ENCODE measurements at regions of chr1 and their contacts with region 1.

Region 1: GRCh38 chr1:112619520-112620376 is at the start of gene CAPZA1:
- DNase-seq: peak; percentile 94
- ATAC-seq: peak; percentile 97 to 98
- total RNA-seq, gene CAPZA1: 48.1 to 59.9 TPM

Region 2: DNA sequence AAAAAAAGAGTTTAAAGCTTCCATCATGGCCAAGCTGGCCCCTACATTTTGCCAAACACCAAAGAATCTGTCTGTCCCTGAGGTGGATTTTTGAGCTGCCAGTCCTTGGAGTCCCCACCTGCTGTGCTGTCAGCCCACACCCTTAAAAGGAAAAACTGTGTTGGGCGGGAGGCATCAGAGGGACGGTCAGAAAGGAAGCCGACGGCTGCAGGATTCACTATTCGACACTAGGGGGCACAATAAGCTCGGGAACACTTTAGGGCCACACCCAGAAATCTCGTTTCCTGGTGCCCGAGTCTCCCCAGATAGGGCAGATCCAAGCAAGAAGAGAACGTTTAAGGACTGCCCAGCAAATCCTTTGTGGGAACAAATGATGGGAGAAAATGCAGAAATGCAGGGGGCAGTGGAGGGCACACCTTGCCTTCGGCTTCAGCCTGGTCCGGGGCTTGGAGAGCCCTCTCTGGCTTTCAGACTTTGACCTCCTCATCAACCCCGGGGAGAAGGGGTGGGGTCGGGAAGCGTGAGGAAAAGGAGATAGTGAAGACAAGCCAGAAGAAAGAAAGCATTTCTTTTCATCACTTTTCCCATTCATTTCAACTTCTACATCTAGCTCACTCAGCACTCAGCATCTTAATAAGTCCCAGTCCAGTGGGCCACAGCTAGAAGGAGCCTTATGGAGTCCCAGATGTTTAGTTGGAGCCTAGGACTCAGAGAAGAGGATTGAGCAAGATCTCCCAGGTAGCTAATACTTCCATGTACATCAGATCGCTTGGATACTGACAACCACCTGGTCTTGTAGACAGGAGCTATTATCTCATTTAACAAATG is 228.8 kb before region 1 on chr1:
- intact Hi-C with region 1: loop called (anchors 5 to 10 kb)
- DNase-seq: peak; percentile 89
- ATAC-seq: peak; percentile 83 to 91

Region 3: DNA sequence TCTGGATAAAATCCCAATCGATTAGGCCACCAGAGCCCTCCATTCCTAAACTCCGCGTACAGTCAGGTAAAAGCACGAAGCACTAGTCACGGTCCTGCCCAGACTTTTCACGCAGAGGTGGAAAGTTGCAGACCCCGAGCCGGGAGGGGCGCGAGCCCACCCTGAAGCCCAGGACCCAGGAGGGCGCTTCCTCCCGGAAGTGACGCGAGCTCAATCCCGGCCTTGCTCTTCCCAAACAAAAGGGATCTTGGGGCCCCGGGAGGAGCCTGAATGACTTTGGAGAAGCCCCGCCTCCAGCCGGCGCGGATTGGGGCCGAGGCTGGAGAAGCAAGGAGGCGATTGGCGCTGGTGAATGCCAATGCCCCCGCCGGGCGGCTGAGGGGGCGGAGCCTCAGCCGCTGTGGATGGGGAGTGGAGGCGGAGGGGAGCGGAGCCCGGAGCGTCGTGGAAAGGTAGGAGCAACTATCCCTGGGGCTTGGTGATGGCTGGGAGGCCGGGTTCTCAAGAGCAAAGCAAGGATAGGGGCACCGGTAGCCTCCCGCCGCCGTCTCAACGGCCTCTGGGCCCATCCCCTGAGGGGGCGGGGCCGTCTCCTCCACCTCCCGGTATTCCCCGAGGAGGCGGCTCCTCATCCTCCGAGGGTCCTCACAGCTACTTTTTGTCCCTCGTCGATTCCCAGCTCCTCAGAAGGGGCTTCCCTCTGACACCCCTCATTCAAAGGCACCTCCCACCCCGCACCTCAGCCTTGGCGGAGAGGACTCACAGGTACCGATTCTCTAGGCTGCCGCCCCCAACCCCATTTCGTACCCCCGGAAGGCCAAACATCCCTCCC is 223.7 kb before region 1 on chr1 and contains the start of gene CTTNBP2NL:
- intact Hi-C with region 1: loop called in 1 of 2 experiments (anchors 5 kb)
- DNase-seq: peak; percentile 98
- ATAC-seq: peak; percentile 95 to 97
- total RNA-seq, gene CTTNBP2NL: 17.1 to 24.3 TPM

Region 4: DNA sequence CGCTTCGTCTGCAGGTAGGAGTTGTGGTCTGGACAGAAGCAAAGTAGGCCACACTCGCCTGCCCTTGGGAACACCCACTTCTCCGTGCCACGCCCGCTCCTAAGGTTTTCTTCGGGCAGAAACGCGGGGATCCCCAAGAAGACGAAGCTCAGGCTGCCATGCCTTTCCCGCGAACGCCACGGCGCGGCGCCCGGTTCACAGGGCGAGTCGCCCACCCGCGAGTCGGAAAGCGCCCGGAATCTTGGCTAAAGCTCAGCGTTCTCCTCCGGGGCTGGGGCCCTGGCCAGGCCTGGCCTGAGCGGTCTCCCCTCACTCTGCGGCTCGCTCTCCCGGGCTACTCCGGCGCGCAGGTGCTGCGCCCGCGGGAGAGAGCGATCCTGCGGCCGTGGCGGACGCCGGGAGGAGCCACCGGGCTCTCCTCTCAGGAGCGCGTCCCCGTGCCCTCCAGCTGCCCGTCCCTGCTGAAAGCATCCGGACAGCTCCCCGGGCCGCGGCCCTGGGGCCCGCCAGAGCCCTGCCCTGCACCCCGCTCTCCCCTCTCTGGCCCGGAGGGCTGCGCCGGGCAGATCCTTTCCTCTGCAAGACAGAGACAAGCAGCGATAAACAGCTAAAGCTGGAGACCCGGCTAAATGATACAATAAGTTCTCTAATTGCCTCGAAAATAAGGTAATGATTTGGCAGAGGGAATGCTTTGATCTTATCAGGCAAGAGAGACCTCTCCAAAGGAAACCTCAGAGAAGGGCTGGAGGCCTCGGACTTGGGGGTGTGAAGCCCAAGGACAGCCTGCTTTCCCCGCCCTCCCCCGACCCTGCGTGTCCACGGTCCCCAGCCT is 117.7 kb before region 1 on chr1:
- intact Hi-C with region 1: loop called in 1 of 2 experiments (anchors 10 kb)
- DNase-seq: peak; percentile 79
- ATAC-seq: peak; percentile 87 to 90

Region 5: GRCh38 chr1:112515311-112516009 is 104.3 kb before region 1 on chr1:
- intact Hi-C with region 1: no loop called
- DNase-seq: no peak
- ATAC-seq: peak; percentile 13 to 72

Region 6: DNA sequence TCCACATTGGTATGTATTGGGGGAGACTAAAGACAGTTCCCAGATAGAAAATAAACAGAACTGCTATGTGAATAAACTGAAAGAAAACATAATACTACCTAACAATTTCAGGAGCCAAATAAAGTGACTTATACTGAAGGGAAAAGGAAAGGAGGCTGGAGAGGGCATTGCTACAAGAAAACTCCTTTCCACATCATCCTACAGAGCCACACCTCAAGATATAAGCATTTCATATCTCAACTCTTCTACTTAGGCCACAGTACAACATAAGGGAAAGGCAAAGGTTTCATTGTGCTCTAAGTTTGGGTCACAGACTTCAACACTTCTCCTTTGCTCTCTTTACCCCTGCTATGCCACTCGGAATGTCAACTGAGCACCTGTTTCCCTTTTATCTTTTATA is 55.7 kb before region 1 on chr1:
- intact Hi-C with region 1: no loop called
- DNase-seq: no peak
- ATAC-seq: no peak

Region 7: DNA sequence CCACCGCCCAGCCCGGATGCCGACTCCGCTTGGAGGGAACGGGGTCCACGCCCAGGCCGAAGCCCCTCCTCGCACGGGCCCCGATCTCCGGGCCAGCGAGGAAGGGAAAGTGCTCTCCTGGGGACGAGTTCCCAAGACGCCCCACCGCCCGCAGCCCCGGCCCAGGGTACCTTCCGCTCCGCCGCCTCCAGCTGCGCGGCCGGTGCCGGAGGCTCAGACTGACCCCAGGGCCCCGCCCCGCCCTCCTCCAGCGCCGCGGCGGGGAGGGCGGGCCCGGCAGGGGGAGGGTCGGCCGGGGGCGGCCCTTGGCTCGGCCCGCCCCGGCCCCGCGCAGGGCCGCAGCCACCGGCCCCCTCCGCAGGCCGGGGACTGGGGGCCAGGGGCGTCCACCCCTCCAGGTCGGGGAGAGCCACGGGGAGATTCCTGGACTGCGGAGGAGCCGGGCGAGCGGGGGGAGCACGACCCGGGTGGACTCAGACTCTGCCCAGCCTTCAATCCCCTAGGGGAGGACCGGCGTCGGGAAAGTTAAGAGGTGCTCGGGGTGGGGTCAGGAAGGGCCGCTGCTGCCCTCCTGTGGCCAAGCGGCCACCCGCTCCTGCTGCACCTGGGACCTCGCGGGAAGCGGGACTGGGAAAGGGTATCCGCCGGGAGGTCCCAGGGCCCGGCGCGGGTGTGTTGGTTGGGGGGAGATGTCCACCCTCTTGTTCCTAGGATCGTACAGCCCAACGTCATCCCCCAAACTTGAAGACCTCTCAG is 87.3 kb after region 1 on chr1 and contains the start of gene RHOC:
- intact Hi-C with region 1: loop called (anchors 2 to 5 kb)
- DNase-seq: peak; percentile 89
- ATAC-seq: peak; percentile 84 to 87
- total RNA-seq, gene RHOC: 146 to 235 TPM

Region 8: DNA sequence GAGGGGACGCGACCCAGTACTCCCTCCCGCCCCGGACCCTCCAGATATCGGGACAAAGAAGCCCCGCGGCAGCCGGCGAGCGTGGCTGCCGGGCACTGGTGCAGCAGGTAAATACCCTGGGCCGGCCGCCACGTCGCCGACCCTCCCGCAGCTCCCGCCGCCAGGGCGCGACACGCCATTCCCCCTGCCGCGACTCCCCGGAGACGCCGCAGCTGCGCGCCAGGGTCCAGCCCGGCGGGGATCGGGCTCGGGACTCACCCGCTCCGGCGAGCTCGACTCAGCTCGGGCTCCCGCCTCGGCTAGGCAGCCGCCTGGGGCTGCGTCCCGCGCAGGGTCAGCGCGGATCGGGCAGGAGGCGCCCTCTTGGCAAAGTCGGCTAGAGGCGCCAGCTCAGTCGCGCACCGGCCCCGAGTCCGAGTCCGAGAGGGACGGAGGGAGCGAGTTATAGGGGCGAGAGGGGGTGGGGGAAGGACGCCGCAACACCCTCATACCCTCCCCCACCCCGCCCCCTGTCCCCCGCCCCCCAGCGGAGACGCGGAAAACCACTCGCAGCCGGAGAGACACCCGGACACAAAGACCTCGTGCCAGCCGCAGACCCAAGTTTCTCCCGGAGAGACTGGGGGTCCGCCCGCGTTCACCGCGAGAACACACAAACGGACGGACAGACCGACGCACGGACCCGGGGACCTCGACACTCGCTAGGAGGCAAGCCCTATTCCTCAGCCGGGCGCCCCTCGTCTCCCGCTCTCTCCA is 1532.9 kb after region 1 on chr1:
- intact Hi-C with region 1: no loop called
- DNase-seq: peak; percentile 46
- ATAC-seq: peak; percentile 78 to 91

Measured in left cardiac atrium (tissue), 4 donors.